Tibial artery (tissue), 4 donors: ENCODE measurements at regions of chr7 and their contacts with region 1.

Region 1: DNA sequence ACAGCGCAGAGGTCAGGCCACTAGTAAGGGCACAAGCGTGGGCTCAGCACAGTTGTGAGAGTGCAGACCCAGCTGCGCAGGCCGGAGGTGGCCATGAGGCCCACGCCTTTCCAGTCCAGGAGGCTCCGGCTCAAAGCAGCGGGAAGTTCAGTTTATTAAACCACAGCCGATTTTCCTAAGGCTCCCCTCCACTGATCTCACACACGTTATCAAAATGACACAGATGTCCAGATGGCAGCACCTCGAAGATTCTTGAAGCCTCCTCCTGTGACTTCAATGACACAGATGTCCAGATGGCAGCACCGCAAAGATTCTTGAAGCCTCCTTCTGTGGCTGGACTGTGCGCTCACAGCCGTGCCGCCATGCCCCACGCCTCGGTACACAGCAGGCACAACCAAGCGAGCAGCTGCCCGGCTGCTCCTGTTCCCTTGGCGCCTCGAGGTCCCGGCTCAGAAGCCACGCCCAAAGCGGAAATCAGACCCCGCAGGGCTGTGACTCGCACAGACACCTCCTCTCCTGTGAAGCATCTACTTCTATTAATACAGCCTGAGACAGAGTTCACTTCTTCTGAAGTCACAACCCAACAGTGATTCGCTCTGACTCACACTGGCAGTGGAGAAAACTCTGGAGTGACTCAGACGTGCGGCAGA is 122.7 kb downstream of the MAD1L1 start:
- DNase-seq: no peak
- H3K4me3 ChIP-seq: no peak overlapping the region
- H3K27ac ChIP-seq: no peak overlapping the region
- H3K4me1 ChIP-seq: peaks cover 6 to 22% (median 14%) of the 10 kb centered on the region in 4 donors
- H3K27me3 ChIP-seq: no peaks in the 10 kb centered on the region
- CTCF ChIP-seq: no peak

Region 2: GRCh38 chr7:2049782-2050510 is 60.1 kb before region 1 on chr7:
- intact Hi-C with region 1: no loop called
- DNase-seq: no peak
- H3K4me3 ChIP-seq: no peak overlapping the region
- H3K27ac ChIP-seq: no peak overlapping the region
- H3K4me1 ChIP-seq: no peaks in the 10 kb centered on the region
- H3K27me3 ChIP-seq: no peaks in the 10 kb centered on the region
- CTCF ChIP-seq: no peak

Region 3: DNA sequence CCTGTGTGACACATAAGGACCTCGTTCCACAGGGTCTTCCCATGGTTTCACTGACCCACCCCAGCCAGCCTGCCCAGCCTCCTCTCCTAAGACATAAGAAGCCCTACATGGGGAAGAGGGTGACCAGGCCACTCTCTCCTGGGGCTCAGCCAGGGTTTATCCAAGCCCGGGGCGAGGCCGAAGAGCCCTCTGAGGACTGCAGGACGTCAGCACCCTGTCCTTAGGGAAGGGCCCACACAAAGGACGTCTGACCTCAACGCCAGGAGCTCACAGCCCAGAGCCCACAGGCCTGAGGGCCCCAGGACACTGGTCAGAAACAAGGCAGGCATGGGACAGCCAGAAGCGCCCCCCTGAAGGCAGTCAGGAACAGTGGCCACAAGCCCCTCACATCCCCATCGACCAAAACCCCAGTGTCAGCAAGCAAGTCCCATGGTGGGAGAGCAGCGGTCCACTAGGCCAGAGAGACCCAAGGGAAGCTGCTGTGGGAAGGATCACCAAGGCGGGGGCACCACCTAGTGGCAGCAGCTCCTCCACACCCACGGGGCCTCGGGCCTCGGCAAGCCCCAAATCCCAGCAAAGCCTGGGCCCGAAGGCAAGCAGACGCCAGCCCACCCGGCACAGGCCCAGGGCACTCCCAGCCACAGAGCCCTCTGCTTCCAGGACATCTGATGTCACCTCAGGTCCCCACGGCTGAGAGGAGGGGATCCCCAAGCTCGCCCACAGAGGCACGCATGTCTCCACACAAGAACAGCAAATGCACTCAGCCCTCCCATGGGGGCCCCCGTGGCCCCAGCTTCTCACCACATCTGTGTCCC is 99.3 kb after region 1 on chr7:
- intact Hi-C with region 1: loop called (anchors 5 kb)
- DNase-seq: peak; percentile 46 to 76
- H3K4me3 ChIP-seq: no peak overlapping the region
- H3K27ac ChIP-seq: no peak overlapping the region
- H3K4me1 ChIP-seq: peaks cover 0 to 12% (median 5%) of the 10 kb centered on the region in 4 donors
- H3K27me3 ChIP-seq: no peaks in the 10 kb centered on the region
- CTCF ChIP-seq: peak; percentile 72 to 76